Heart left ventricle (tissue), 16 donors: ENCODE measurements at regions of chr11 and their contacts with region 1.

Region 1: DNA sequence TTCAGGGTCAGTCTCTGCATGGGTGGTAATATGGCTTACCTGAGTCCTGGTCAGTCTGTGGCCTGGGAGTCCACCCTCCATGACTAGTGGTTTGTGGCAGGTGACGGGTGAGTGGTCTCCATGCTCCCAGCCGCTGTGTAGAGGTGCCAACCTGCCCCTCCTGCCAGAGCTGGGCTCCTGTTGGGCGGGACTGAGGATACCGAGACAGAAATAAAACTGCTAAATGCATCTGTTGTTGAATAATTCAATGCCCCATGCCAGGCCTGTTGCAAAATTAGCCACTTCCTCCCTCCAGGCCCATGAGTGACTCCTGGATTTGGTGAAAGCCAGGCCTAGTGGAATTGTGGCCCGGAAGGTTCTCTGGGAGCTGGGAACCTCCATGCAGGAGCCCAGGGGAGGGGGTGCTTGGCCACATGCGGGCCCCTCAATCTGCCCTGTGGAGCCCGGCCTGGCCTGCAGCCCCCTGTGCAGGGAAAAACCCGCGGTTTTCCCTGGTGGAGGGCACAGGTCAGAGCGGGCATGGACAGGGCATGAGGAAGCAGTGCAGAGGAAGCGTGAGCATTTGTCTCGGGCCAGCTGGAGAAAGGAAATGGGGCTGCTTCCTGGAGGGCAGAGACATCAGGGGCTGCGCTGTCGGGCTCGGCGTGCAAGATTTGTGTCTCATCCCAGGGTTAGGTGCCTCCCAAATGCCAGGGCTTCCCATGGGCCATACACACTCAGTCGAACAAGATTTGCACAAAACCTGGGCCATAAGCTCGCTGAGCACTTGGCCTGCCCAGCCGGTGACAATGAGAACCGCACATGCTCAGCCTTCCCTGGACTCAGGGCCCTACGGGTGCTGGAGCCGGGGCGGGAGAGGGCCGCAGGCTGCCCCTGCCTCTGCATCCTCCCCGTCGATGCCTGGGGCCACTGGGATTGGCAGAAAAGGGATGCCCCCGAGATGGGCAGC is 66.9 kb downstream of the KCNQ1 start:
- DNase-seq: peak; percentile 40 to 72 (median 63)
- ATAC-seq: peak; percentile 40 to 67 (median 48)
- H3K4me3 ChIP-seq: no peak overlapping the region
- H3K27ac ChIP-seq: peak overlapping the region in 11 of 12 donors; percentile 32 to 79 (median 77)
- H3K4me1 ChIP-seq: peaks cover 0 to 79% (median 53%) of the 10 kb centered on the region in 12 donors
- H3K27me3 ChIP-seq: no peaks in the 10 kb centered on the region
- CTCF ChIP-seq: no peak
- POLR2A ChIP-seq: no peak

Region 2: DNA sequence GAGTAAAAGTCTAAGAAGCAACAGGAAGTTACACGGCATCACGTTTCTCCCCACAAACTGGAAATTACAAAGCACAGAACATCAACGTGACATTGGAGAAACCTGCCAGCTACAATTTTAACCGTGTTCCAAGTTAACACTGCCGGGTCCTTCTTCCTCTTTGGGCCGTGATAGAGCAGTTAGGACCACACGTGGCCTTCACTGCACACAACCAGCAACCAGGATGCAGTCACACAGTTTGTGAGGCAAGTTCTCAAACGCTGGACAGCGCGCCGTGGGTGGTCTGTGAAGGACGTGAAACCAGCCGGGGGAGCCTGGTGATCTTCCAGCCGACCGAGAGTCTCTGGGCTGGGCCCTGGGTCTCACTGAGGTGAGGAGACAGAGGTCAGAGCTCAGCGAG is 224.6 kb before region 1 on chr11:
- intact Hi-C with region 1: loop called in 1 of 10 experiments (anchors 10 kb)
- DNase-seq: peak in 2 of 5 donors; percentile 13 to 57
- ATAC-seq: no peak
- H3K4me3 ChIP-seq: no peak overlapping the region
- H3K27ac ChIP-seq: no peak overlapping the region
- H3K4me1 ChIP-seq: peaks cover 0 to 16% (median 3%) of the 10 kb centered on the region in 12 donors
- H3K27me3 ChIP-seq: peaks cover 0 to 4% (median 0%) of the 10 kb centered on the region in 9 donors
- CTCF ChIP-seq: no peak
- POLR2A ChIP-seq: no peak

Region 3: DNA sequence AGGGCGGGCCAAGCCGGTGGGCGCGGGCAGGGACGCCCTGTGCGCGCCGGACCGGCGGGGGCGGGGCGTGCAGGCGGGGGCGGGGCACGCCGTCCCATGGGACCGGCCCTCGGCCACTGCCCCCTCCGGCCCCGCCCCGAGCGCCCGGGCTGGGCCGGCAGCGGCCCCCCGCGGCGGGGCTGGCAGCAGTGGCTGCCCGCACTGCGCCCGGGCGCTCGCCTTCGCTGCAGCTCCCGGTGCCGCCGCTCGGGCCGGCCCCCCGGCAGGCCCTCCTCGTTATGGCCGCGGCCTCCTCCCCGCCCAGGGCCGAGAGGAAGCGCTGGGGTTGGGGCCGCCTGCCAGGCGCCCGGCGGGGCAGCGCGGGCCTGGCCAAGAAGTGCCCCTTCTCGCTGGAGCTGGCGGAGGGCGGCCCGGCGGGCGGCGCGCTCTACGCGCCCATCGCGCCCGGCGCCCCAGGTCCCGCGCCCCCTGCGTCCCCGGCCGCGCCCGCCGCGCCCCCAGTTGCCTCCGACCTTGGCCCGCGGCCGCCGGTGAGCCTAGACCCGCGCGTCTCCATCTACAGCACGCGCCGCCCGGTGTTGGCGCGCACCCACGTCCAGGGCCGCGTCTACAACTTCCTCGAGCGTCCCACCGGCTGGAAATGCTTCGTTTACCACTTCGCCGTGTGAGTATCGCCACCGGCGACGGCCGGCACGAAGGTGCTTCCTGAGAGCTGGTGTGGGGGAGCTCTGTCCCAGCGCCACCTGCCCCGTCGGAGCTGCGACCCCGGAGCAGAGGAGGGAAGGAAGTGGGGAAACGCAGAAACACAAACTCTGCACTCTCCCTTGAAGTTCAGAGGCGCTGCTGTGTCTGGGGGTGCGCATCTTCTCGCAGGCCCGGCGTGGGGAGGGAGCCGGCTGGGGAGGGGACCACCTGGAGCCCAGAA is 66.6 kb before region 1 on chr11 and contains the start of gene KCNQ1:
- intact Hi-C with region 1: loop called in 1 of 10 experiments (anchors 5 kb)
- DNase-seq: peak; percentile 55 to 84 (median 69)
- ATAC-seq: peak in 3 of 4 donors; percentile 60 to 85 (median 79)
- H3K4me3 ChIP-seq: peak within 1 kb of the TSS; percentile 11 to 68 (median 53)
- H3K27ac ChIP-seq: peak within 1 kb of the TSS in 9 of 12 donors; percentile 15 to 69 (median 49)
- H3K4me1 ChIP-seq: peaks cover 5 to 49% (median 33%) of the 10 kb centered on the region in 12 donors
- H3K27me3 ChIP-seq: peaks cover 0 to 9% (median 0%) of the 10 kb centered on the region in 9 donors
- CTCF ChIP-seq: peak in 1 of 12 donors; percentile 8
- POLR2A ChIP-seq: peak; percentile 43 to 59
- total RNA-seq, gene KCNQ1: 18.6 to 42.4 (median 38.4) TPM

Region 4: DNA sequence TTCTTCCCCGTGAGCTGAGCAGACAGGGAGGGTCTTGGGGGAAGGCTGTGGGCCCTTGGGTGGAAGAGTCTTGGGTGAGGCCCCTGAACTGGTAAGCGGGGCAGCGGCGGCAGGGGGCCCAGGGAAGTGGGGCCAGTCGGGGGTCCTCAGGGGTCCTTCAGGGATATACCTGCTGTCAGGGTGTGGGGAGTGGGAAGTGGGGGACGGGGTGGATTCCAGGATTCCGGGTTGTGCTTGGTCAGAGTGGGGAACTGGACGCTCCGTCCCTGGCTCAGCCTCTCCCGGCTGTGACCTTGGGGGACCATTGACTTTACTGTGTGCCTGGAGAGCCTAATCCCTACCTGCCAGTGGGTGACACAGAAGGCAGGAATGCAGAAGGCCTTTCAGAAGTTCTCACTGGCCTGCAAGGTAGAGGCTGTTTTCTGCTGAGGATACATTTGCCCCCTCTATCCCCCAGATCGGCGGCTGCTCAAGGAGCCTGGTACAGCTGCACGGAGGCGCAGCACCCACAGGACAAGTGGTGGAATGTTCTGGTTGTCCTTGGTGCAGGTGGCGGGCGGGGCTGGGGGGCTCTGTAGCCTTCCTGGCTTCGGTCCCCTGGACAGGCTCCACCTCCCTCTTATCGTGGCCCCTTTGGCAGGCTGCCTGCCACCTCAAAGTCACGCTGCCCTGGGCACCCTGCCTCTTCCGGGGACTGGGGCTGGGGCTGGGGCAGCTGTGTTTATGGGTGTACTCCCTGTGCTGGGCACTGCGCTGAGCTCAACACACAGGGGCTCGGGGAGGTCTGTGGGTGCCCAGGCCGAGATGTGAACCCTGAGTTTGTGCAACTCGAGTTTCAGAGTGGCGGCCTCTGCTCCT is 48.6 kb before region 1 on chr11:
- intact Hi-C with region 1: loop called in 4 of 10 experiments (anchors 5 kb)
- DNase-seq: peak; percentile 81 to 90 (median 88)
- ATAC-seq: peak; percentile 79 to 90 (median 86)
- H3K4me3 ChIP-seq: peak overlapping the region in 2 of 12 donors; percentile 2 to 8
- H3K27ac ChIP-seq: peak overlapping the region; percentile 79 to 97 (median 89)
- H3K4me1 ChIP-seq: peaks cover 0 to 91% (median 37%) of the 10 kb centered on the region in 12 donors
- H3K27me3 ChIP-seq: no peaks in the 10 kb centered on the region
- CTCF ChIP-seq: no peak
- POLR2A ChIP-seq: peak in 1 of 2 donors; percentile 29

Region 5: GRCh38 chr11:2474061-2474901 is 37.4 kb before region 1 on chr11:
- intact Hi-C with region 1: loop called in 3 of 10 experiments (anchors 5 kb)
- DNase-seq: peak in 3 of 5 donors; percentile 65 to 88 (median 66)
- ATAC-seq: peak; percentile 68 to 91 (median 90)
- H3K4me3 ChIP-seq: no peak overlapping the region
- H3K27ac ChIP-seq: peak overlapping the region in 7 of 12 donors; percentile 9 to 80 (median 66)
- H3K4me1 ChIP-seq: peaks cover 0 to 30% (median 7%) of the 10 kb centered on the region in 12 donors
- H3K27me3 ChIP-seq: no peaks in the 10 kb centered on the region
- CTCF ChIP-seq: peak in 3 of 12 donors; percentile 21 to 31 (median 23)
- POLR2A ChIP-seq: no peak

Region 6: DNA sequence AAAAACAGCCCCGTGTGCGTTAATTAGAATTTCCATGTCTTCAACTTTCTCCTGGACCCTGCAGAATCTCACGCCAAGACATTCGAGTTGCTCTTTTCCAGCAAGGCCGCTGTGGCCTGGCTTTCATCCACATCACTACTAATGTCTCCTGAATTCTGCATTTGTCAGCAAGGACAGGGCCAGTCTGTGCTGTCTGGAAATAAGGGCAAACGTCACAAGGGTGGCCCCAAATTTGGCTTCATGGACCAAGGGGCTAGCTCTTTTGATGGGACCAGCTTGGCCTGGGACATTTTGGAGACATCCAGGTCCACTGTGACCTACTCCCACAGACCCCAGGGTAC is 154.7 kb after region 1 on chr11:
- intact Hi-C with region 1: no loop called
- DNase-seq: peak in 1 of 5 donors; percentile 29
- ATAC-seq: peak in 2 of 4 donors; percentile 6 to 62
- H3K4me3 ChIP-seq: no peak overlapping the region
- H3K27ac ChIP-seq: peak overlapping the region in 3 of 12 donors; percentile 13 to 50 (median 29)
- H3K4me1 ChIP-seq: peaks cover 0 to 7% (median 0%) of the 10 kb centered on the region in 12 donors
- H3K27me3 ChIP-seq: no peaks in the 10 kb centered on the region
- CTCF ChIP-seq: no peak
- POLR2A ChIP-seq: no peak